Activated CD8-positive, alpha-beta T cell treated with anti-CD3 and anti-CD28 coated beads, Interleukin-2, amount 10 ng/mL, durations not matched to agents 7 days and 5 days (primary cell): ENCODE measurements at regions of chr11 and their contacts with region 1.

Region 1: GRCh38 chr11:62665075-62665598 is at the starts of genes C11orf98 and CSKMT:
- DNase-seq: peak; percentile 97
- ATAC-seq: peak; percentile 93
- H3K4me3 Mint-ChIP-seq: peak within 1 kb of the TSS; percentile 98
- H3K27ac Mint-ChIP-seq: peak within 1 kb of the TSS; percentile 93
- H3K4me1 Mint-ChIP-seq: peaks cover 38% of the 10 kb centered on the region
- H3K27me3 Mint-ChIP-seq: no peaks in the 10 kb centered on the region
- total RNA-seq, gene C11orf98: 131 to 133 TPM
- total RNA-seq, gene CSKMT: 21.9 to 22.8 TPM

Region 2: GRCh38 chr11:62601394-62602140 is 63.6 kb before region 1 on chr11 and contains the start of gene MTA2:
- CTCF ChIA-PET with region 1: interaction called, 6 read pairs
- POLR2A ChIA-PET with region 1: interaction called, 23 read pairs
- DNase-seq: peak; percentile 100
- ATAC-seq: peak; percentile 88
- H3K4me3 Mint-ChIP-seq: peak within 1 kb of the TSS; percentile 89
- H3K27ac Mint-ChIP-seq: peak within 1 kb of the TSS; percentile 88
- H3K4me1 Mint-ChIP-seq: peaks cover 52% of the 10 kb centered on the region
- H3K27me3 Mint-ChIP-seq: no peaks in the 10 kb centered on the region
- total RNA-seq, gene MTA2: 249 to 273 TPM

Region 3: DNA sequence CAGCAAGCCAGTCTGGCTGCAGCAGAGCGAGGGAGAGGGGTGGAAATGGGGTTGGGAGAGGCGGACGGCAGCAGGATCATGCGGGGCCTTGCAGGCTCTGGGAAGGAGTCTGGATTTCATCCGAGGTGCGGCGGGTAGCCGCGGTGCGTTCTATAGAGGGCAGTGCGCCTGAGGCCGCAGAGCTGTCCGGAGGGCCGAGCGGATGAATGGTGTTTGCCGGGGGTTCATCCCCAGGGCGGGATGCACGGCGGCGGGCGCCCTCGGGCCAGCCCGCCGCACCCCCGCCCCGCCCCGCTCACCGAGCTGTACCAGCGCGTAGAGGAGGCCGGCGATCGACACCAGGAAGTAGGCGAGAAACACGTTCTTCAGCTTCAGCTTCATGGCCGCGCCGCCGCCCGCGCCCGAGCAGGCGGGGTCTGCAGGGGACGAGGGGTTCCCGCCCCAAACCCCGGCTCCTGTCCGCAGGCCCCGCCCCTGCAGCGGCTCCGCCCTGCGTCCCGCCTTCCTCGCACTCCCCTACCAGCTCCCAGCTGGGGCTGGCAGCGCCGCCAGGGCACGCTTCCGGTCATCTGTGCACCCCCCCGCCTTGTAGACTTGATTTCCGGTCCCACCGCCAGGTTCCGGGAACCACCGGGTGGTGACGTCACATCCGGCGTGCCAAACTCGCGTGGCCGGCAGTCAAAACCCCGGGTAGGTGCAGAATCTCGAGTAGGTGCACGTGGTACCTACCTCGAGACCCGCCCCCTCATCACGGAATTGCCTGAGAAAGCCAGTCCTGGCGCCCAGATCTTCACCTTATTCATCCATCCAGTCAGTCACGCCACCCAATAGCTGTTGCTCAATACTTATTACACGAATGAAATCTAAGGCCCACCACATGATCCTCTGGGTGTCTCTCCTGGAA is 43.3 kb before region 1 on chr11 and contains the start of gene B3GAT3:
- CTCF ChIA-PET with region 1: interaction called, 4 read pairs
- POLR2A ChIA-PET with region 1: interaction called, 24 read pairs
- DNase-seq: peak; percentile 98
- ATAC-seq: peak; percentile 90
- H3K4me3 Mint-ChIP-seq: peak within 1 kb of the TSS; percentile 86
- H3K27ac Mint-ChIP-seq: peak within 1 kb of the TSS; percentile 97
- H3K4me1 Mint-ChIP-seq: peaks cover 29% of the 10 kb centered on the region
- H3K27me3 Mint-ChIP-seq: no peaks in the 10 kb centered on the region
- total RNA-seq, gene B3GAT3: 63.0 to 64.8 TPM

Region 4: DNA sequence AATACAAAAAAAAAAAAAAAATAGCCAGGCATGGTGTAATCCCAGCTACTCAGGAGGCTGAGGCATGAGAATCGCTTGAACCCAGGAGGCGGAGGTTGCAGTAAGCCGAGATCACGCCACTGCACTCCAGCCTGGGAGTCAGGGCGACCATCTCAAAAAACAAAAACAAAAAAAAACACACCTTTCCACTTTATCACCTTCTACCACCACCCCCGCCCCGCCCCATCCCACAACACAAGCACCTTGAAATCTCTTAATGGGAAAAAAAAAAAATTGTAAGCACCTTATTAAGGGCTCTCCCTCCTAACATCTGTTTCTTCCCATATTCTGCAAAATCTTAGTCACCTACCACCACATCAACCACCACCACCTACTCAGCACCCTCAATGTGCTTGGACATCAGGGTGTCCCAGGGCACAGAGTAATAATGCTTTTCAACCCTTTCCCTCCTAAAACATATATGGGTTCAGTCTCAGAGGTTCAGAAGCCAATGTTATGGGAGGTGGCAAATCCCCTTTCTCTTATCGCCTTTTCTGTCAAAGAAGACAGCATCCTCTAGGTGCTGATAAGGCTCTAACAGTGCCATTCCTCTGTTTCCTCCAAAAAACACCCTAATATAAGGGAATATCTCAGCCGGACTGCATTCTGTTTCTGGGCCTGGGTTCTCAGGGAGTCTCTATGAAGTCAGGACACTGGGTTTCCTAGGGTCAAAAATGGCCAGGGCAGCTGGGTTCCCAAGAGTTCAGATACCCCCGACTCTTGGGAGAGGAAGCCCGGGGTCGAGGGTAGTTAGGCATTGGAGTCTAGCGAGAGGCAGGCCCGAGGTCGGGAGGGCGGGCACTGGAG is 12.8 kb before region 1 on chr11:
- CTCF ChIA-PET with region 1: interaction called, 15 read pairs
- POLR2A ChIA-PET with region 1: interaction called, 76 read pairs
- DNase-seq: no peak
- ATAC-seq: peak; percentile 7
- H3K4me3 Mint-ChIP-seq: peak overlapping the region; percentile 87
- H3K27ac Mint-ChIP-seq: peak overlapping the region; percentile 91
- H3K4me1 Mint-ChIP-seq: peaks cover 26% of the 10 kb centered on the region
- H3K27me3 Mint-ChIP-seq: no peaks in the 10 kb centered on the region

Region 5: DNA sequence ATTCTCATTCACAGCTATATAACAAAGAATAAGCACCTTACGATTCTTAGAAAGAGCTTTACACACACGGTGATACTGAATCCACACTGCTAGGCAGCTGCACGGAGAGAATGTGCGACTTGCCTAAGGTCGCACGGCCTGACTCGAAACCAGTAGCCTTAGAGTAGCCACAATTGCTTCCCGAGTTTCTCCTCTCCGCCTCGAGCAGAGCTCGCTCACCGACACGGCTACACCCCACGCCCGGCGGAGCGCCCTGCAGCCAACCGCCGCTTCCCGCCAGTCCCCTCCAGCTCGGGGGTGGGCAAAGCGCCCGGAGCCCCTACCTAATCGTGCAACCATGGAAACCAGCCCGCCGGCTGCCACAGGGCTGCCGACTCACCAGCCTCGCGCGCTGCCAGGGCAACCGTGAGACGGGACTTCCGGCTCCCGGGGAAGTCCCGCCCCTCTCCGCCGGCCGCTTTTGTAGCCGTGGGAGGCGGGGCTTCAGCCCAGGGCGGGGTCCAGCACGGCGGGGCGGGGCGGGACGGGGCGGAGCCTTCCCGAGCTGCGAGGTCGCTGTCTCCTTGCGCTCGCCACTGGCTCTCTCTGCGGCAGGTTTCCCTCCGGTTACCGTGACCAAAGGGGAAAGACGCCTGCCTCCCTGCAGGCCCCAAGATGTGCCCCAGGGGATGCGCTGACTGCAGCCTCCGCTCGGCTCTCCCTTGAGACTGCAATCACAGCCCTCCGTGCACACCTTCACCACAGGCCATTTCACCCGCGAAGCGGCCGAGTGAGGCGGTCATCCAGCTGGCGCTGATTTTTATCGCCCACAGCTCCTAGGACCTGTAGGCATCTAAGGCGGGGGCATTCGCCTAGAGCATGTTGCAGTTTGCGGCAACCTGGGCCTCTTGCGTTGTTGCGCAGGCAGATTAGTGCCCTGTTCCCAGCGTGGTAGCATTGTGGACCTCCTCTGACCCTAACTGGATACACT is 41.0 kb after region 1 on chr11:
- CTCF ChIA-PET with region 1: interaction called, 3 read pairs
- POLR2A ChIA-PET with region 1: interaction called, 27 read pairs
- DNase-seq: peak; percentile 95
- ATAC-seq: peak; percentile 67
- H3K4me3 Mint-ChIP-seq: peak overlapping the region; percentile 90
- H3K27ac Mint-ChIP-seq: peak overlapping the region; percentile 83
- H3K4me1 Mint-ChIP-seq: peaks cover 49% of the 10 kb centered on the region
- H3K27me3 Mint-ChIP-seq: no peaks in the 10 kb centered on the region

Region 6: GRCh38 chr11:62726915-62727763 is 62.0 kb after region 1 on chr11 and contains the start of gene HNRNPUL2:
- CTCF ChIA-PET with region 1: interaction called, 5 read pairs
- POLR2A ChIA-PET with region 1: interaction called, 19 read pairs
- DNase-seq: peak; percentile 99
- ATAC-seq: peak; percentile 87
- H3K4me3 Mint-ChIP-seq: peak within 1 kb of the TSS; percentile 94
- H3K27ac Mint-ChIP-seq: peak within 1 kb of the TSS; percentile 96
- H3K4me1 Mint-ChIP-seq: peaks cover 47% of the 10 kb centered on the region
- H3K27me3 Mint-ChIP-seq: no peaks in the 10 kb centered on the region
- total RNA-seq, gene HNRNPUL2: 65.4 to 67.0 TPM